ENCODE measurements at regions of chr21 and their contacts with region 1.

Region 1: DNA sequence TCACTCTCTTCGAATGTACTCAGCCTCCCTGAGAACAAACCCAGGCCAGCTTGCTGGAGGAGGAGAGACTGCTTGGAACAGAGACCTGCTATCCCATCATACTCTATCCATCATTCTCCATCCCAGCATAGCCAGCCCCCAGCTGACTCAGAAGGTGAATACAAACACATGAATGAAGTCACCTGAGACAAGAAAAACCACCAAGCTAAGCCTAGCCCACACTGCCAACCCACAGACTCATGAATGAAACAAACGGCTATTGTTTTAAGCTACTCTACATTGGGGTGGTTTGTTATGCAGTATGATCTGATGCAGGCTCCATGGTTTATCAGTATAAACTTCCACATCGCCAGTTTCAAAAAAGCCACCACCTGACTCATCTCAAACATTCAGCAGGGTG is 395.6 kb downstream of the SETD4 start:
- DNase-seq: peak in 2 of 4 donors; percentile 13 to 24
- ATAC-seq: peak; percentile 48
- H3K4me3 ChIP-seq: no peak overlapping the region
- H3K27ac ChIP-seq: no peak overlapping the region
- H3K4me1 ChIP-seq: no peaks in the 10 kb centered on the region
- H3K27me3 ChIP-seq: no peaks in the 10 kb centered on the region
- CTCF ChIP-seq: no peak
- POLR2A ChIP-seq: no peak

Region 2: GRCh38 chr21:34834852-34835501 is 829.7 kb before region 1 on chr21:
- intact Hi-C with region 1: no loop called
- DNase-seq: no peak
- ATAC-seq: no peak
- H3K4me3 ChIP-seq: no peak overlapping the region
- H3K27ac ChIP-seq: peak overlapping the region in 2 of 4 donors; percentile 7 to 64
- H3K4me1 ChIP-seq: peaks cover 34% of the 10 kb centered on the region
- H3K27me3 ChIP-seq: no peaks in the 10 kb centered on the region
- CTCF ChIP-seq: no peak
- POLR2A ChIP-seq: no peak

Region 3: GRCh38 chr21:35265170-35265877 is 399.4 kb before region 1 on chr21:
- intact Hi-C with region 1: no loop called
- DNase-seq: no peak
- ATAC-seq: no peak
- H3K4me3 ChIP-seq: no peak overlapping the region
- H3K27ac ChIP-seq: no peak overlapping the region
- H3K4me1 ChIP-seq: no peaks in the 10 kb centered on the region
- H3K27me3 ChIP-seq: no peaks in the 10 kb centered on the region
- CTCF ChIP-seq: no peak
- POLR2A ChIP-seq: no peak

Region 4: GRCh38 chr21:35833991-35834390 is 169.3 kb after region 1 on chr21:
- intact Hi-C with region 1: loop called (anchors 10 kb)
- DNase-seq: no peak
- ATAC-seq: no peak
- H3K4me3 ChIP-seq: no peak overlapping the region
- H3K27ac ChIP-seq: no peak overlapping the region
- H3K4me1 ChIP-seq: no peaks in the 10 kb centered on the region
- H3K27me3 ChIP-seq: no peaks in the 10 kb centered on the region
- CTCF ChIP-seq: no peak
- POLR2A ChIP-seq: no peak